HepG2 (cell line): ENCODE measurements at regions of chr6 and their contacts with region 1.

Region 1: GRCh38 chr6:15691250-15691869 is 28.5 kb upstream of the DTNBP1 start:
- DNase-seq: peak; percentile 81
- ATAC-seq: peak; percentile 99
- H3K4me3 ChIP-seq: no peak overlapping the region
- H3K27ac ChIP-seq: no peak overlapping the region
- H3K4me1 ChIP-seq: peaks cover 9% of the 10 kb centered on the region
- H3K27me3 ChIP-seq: peaks cover 0 to 8% of the 10 kb centered on the region in 2 experiments; a peak in 1 of 5 replicates
- CTCF ChIP-seq: peak; percentile 100
- EP300 ChIP-seq: no peak; a peak in 1 of 4 replicates
- POLR2A ChIP-seq: no peak
- RAD21 ChIP-seq: peak; percentile 98

Region 2: DNA sequence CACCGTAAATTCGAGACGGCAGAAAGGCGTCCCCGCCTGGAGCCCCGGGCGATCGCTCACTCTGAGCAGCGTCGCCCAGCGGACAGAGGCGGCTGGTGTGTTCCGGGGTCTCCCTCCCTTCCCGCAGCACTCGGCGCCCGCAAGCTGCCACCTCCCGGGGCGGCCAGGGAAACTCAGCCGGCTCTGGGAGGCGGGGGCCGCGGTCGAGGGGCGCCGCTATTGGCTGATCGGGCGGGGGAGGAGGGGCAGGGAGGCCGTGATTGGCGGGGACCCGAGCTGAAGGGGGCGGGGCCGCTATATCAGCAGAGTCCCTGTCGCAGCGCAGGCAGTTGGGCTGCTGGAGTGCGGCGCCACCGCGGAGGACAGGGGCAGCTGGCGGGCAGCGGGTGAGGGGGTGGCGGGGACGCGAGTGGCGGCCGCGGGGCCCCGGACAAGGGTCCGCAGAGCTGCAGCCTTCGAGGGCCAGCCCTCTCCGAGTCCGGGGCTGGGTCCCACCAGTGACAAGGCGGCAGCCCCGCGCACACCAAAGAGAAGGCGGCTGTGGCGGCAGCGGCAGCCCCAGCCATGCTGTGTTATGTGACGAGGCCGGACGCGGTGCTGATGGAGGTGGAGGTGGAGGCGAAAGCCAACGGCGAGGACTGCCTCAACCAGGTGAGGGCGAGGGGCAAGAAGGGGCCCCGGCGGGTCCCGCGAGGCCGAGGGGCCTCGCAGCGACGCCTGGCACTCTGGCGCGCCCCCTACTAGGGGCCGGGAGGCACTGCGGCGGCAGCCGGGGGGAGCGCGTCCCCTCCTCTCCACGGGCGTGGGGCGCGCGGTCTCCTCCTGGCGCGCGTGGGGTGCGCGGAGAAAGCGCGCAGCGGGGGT is 437.6 kb after region 1 on chr6 and contains the start of gene MYLIP:
- CTCF ChIA-PET with region 1: interaction called, 19 read pairs
- POLR2A ChIA-PET with region 1: interaction called, 3 read pairs
- in situ Hi-C with region 1: no loop called
- intact Hi-C with region 1: loop called (anchors 1 kb)
- DNase-seq: peak; percentile 93
- ATAC-seq: peak; percentile 94
- H3K4me3 ChIP-seq: peak within 1 kb of the TSS; percentile 78 to 95 (median 95)
- H3K27ac ChIP-seq: peak within 1 kb of the TSS; percentile 67
- H3K4me1 ChIP-seq: peaks cover 26% of the 10 kb centered on the region
- H3K27me3 ChIP-seq: peaks cover 0 to 32% of the 10 kb centered on the region in 2 experiments; a peak in 3 of 5 replicates
- CTCF ChIP-seq: peak; percentile 94
- EP300 ChIP-seq: peak in 1 of 2 experiments; percentile 19; a peak in 1 of 4 replicates
- POLR2A ChIP-seq: peak; percentile 98 to 100
- RAD21 ChIP-seq: peak; percentile 86
- total RNA-seq, gene MYLIP: 3.4 and 4.0 TPM in 2 replicates

Region 3: GRCh38 chr6:16168858-16169257 is 477.5 kb after region 1 on chr6:
- CTCF ChIA-PET with region 1: interaction called, 13 read pairs
- POLR2A ChIA-PET with region 1: no interaction called
- in situ Hi-C with region 1: no loop called
- intact Hi-C with region 1: loop called (anchors 1 kb)
- DNase-seq: peak; percentile 32
- ATAC-seq: peak; percentile 68
- H3K4me3 ChIP-seq: no peak overlapping the region
- H3K27ac ChIP-seq: no peak overlapping the region
- H3K4me1 ChIP-seq: no peaks in the 10 kb centered on the region
- H3K27me3 ChIP-seq: peaks cover 0 to 12% of the 10 kb centered on the region in 2 experiments; a peak in 2 of 5 replicates
- CTCF ChIP-seq: peak; percentile 54
- EP300 ChIP-seq: no peak
- POLR2A ChIP-seq: no peak
- RAD21 ChIP-seq: no peak

Region 4: GRCh38 chr6:16183187-16183664 is 491.9 kb after region 1 on chr6:
- CTCF ChIA-PET with region 1: interaction called, 53 read pairs
- POLR2A ChIA-PET with region 1: no interaction called
- in situ Hi-C with region 1: loop called (anchors 5 kb)
- intact Hi-C with region 1: loop called (anchors 1 kb)
- DNase-seq: peak; percentile 48
- ATAC-seq: no peak
- H3K4me3 ChIP-seq: no peak overlapping the region
- H3K27ac ChIP-seq: no peak overlapping the region
- H3K4me1 ChIP-seq: peaks cover 19% of the 10 kb centered on the region
- H3K27me3 ChIP-seq: no peaks in the 10 kb centered on the region; a peak in 1 of 5 replicates
- CTCF ChIP-seq: peak; percentile 65
- EP300 ChIP-seq: no peak
- POLR2A ChIP-seq: no peak
- RAD21 ChIP-seq: no peak

Region 5: DNA sequence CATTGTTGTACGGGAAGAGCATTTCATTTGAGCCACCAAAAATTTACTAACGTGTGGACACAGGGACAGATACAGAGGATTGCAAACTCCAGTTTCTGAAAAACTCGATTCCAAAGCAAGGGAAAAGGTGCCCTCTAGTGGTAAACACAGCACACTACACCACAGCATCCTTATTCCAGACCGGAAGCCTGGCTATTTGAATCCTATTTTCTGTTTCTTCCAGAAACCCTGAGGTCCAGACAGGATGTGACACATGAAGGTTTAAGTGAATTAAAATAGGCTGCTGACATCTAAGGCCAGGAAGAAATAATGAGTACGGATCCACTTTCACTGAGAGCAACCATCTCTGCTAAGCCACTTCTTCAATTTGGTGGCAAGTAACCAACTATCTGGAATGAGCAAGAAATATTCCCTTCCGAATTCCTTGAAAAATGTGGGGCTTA is 515.3 kb after region 1 on chr6:
- CTCF ChIA-PET with region 1: interaction called, 82 read pairs
- POLR2A ChIA-PET with region 1: no interaction called
- in situ Hi-C with region 1: no loop called
- intact Hi-C with region 1: loop called (anchors 1 kb)
- DNase-seq: peak; percentile 50
- ATAC-seq: peak; percentile 68
- H3K4me3 ChIP-seq: no peak overlapping the region
- H3K27ac ChIP-seq: no peak overlapping the region
- H3K4me1 ChIP-seq: peaks cover 5% of the 10 kb centered on the region; the same call in 1 of the 2 replicates
- H3K27me3 ChIP-seq: no peaks in the 10 kb centered on the region
- CTCF ChIP-seq: peak; percentile 89
- EP300 ChIP-seq: no peak
- POLR2A ChIP-seq: no peak
- RAD21 ChIP-seq: peak; percentile 84